Naive thymus-derived CD8-positive, alpha-beta T cell (primary cell): ENCODE measurements at regions of chr19 and their contacts with region 1.

Region 1: GRCh38 chr19:21358768-21359451 is at the start of gene ZNF738:
- DNase-seq: peak; percentile 64 to 92 (median 78)
- ATAC-seq: peak; percentile 95
- H3K4me3 Mint-ChIP-seq: peak within 1 kb of the TSS; percentile 96 to 100 (median 99)
- H3K27ac Mint-ChIP-seq: peak within 1 kb of the TSS; percentile 93 to 97 (median 95)
- H3K4me1 Mint-ChIP-seq: peaks cover 0 to 22% (median 18%) of the 10 kb centered on the region in 4 donors
- H3K27me3 Mint-ChIP-seq: no peaks in the 10 kb centered on the region
- polyA plus RNA-seq, gene ZNF738: 3.9 to 4.1 (median 3.9) TPM

Region 2: GRCh38 chr19:21383980-21384582 is 25.2 kb after region 1 on chr19:
- POLR2A ChIA-PET with region 1: no interaction called
- DNase-seq: no peak
- ATAC-seq: no peak
- H3K4me3 Mint-ChIP-seq: no peak overlapping the region
- H3K27ac Mint-ChIP-seq: no peak overlapping the region
- H3K4me1 Mint-ChIP-seq: no peaks in the 10 kb centered on the region
- H3K27me3 Mint-ChIP-seq: no peaks in the 10 kb centered on the region

Region 3: GRCh38 chr19:21396893-21397572 is 38.1 kb after region 1 on chr19 and contains the start of gene ZNF493:
- POLR2A ChIA-PET with region 1: interaction called, 12 read pairs
- DNase-seq: peak; percentile 73 to 96 (median 92)
- ATAC-seq: peak; percentile 99
- H3K4me3 Mint-ChIP-seq: peak within 1 kb of the TSS; percentile 87 to 99 (median 98)
- H3K27ac Mint-ChIP-seq: peak within 1 kb of the TSS; percentile 86 to 97 (median 94)
- H3K4me1 Mint-ChIP-seq: peaks cover 8 to 42% (median 38%) of the 10 kb centered on the region in 4 donors
- H3K27me3 Mint-ChIP-seq: peaks cover 0 to 2% (median 0%) of the 10 kb centered on the region in 5 donors
- polyA plus RNA-seq, gene ZNF493: 20.4 to 28.1 (median 24.7) TPM